Activated B cell treated with CpG ODN at 0.5 μM for 24 hours (primary cell): ENCODE measurements at regions of chr3 and their contacts with region 1.

Region 1: GRCh38 chr3:30606301-30607031 is at the start of gene TGFBR2:
- DNase-seq: peak; percentile 84
- ATAC-seq: peak; percentile 81
- H3K4me3 Mint-ChIP-seq: peak within 1 kb of the TSS; percentile 97
- H3K27ac Mint-ChIP-seq: peak within 1 kb of the TSS; percentile 99
- H3K4me1 Mint-ChIP-seq: peaks cover 85% of the 10 kb centered on the region
- H3K27me3 Mint-ChIP-seq: no peaks in the 10 kb centered on the region
- CTCF ChIP-seq: no peak
- total RNA-seq, gene TGFBR2: 99.1 and 104 TPM in 2 replicates

Region 2: GRCh38 chr3:30332196-30333021 is 274.1 kb before region 1 on chr3:
- CTCF ChIA-PET with region 1: no interaction called
- POLR2A ChIA-PET with region 1: interaction called, 7 read pairs
- intact Hi-C with region 1: loop called (anchors 5 kb)
- DNase-seq: no peak
- ATAC-seq: peak; percentile 77
- H3K4me3 Mint-ChIP-seq: peak overlapping the region; percentile 69
- H3K27ac Mint-ChIP-seq: peak overlapping the region; percentile 63
- H3K4me1 Mint-ChIP-seq: peaks cover 23% of the 10 kb centered on the region
- H3K27me3 Mint-ChIP-seq: no peaks in the 10 kb centered on the region
- CTCF ChIP-seq: no peak

Region 3: DNA sequence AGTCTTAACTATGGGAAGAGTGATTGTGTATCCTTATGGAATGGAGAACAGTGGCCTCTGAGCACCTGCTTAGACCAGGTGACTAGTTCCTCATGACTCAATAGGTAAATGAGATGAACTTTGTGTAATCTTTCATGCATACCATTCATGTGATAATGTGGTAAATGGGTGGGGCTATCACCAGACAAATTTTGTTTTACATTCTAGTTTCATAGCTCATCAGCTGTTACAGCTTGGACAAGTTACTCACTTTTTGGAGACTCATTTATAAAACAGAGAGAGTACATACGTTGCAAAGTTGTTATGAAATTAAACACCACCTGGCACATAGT is 103.8 kb before region 1 on chr3:
- CTCF ChIA-PET with region 1: interaction called, 9 read pairs
- POLR2A ChIA-PET with region 1: interaction called, 41 read pairs
- intact Hi-C with region 1: loop called (anchors 1 kb)
- DNase-seq: no peak
- ATAC-seq: peak; percentile 66
- H3K4me3 Mint-ChIP-seq: peak overlapping the region; percentile 74
- H3K27ac Mint-ChIP-seq: peak overlapping the region; percentile 95
- H3K4me1 Mint-ChIP-seq: peaks cover 64% of the 10 kb centered on the region
- H3K27me3 Mint-ChIP-seq: no peaks in the 10 kb centered on the region
- CTCF ChIP-seq: no peak

Region 4: GRCh38 chr3:30634761-30635735 is 28.6 kb after region 1 on chr3:
- CTCF ChIA-PET with region 1: interaction called, 3 read pairs
- POLR2A ChIA-PET with region 1: interaction called, 38 read pairs
- intact Hi-C with region 1: loop called (anchors 1 kb)
- DNase-seq: no peak
- ATAC-seq: no peak
- H3K4me3 Mint-ChIP-seq: peak overlapping the region; percentile 48
- H3K27ac Mint-ChIP-seq: peak overlapping the region; percentile 91
- H3K4me1 Mint-ChIP-seq: peaks cover 99% of the 10 kb centered on the region
- H3K27me3 Mint-ChIP-seq: no peaks in the 10 kb centered on the region
- CTCF ChIP-seq: no peak

Region 5: GRCh38 chr3:30658328-30659052 is 52.0 kb after region 1 on chr3:
- CTCF ChIA-PET with region 1: interaction called, 12 read pairs
- POLR2A ChIA-PET with region 1: interaction called, 63 read pairs
- intact Hi-C with region 1: loop called (anchors 1 kb)
- DNase-seq: no peak
- ATAC-seq: peak; percentile 87
- H3K4me3 Mint-ChIP-seq: peak overlapping the region; percentile 12
- H3K27ac Mint-ChIP-seq: peak overlapping the region; percentile 82
- H3K4me1 Mint-ChIP-seq: peaks cover 94% of the 10 kb centered on the region
- H3K27me3 Mint-ChIP-seq: no peaks in the 10 kb centered on the region
- CTCF ChIP-seq: no peak

Region 6: GRCh38 chr3:30886888-30887287 is 280.4 kb after region 1 on chr3:
- CTCF ChIA-PET with region 1: no interaction called
- POLR2A ChIA-PET with region 1: no interaction called
- intact Hi-C with region 1: no loop called
- DNase-seq: no peak
- ATAC-seq: no peak
- H3K4me3 Mint-ChIP-seq: no peak overlapping the region
- H3K27ac Mint-ChIP-seq: no peak overlapping the region
- H3K4me1 Mint-ChIP-seq: peaks cover 6% of the 10 kb centered on the region
- H3K27me3 Mint-ChIP-seq: peaks cover 32% of the 10 kb centered on the region
- CTCF ChIP-seq: no peak